ENCODE measurements at regions of chr9 and their contacts with region 1.

Region 1: DNA sequence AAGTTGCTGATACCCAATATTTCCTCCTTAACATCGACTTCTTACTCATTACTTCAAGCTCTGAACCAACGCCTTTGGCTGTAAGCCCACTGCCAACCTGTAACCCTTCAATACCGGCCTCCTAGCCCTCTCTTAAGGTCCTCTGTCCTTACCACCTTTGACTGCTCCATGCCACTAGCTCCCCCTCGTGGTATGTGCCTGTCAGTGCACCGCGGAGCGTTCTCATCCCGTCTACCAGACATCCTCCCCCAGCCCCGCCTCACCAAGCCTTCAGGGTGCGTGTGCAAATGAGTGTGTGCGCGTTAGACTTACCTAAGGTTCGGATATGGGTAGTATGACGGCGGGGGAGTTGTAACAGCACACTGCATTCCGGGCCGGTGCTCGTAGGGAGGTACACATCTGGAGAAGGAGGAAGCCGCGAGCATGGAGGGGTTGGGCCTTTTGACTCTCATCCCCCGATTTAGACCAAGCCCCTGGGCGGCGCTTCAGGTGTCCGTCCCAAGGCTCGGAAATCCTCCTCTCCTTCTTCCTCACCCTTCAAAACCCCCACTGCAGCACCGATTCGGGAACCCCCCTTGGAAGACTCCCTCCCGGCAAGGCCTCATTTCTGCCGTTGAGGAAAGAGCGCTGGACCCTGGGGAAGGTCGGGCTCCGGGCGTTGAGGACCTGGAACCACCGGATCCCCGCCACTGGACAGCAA is 2.8 kb upstream of the MYORG start:
- DNase-seq: peak; percentile 88
- H3K4me3 ChIP-seq: peak overlapping the region; percentile 61
- H3K27ac ChIP-seq: no peak overlapping the region
- H3K4me1 ChIP-seq: peaks cover 42% of the 10 kb centered on the region
- CTCF ChIP-seq: peak; percentile 98

Region 2: DNA sequence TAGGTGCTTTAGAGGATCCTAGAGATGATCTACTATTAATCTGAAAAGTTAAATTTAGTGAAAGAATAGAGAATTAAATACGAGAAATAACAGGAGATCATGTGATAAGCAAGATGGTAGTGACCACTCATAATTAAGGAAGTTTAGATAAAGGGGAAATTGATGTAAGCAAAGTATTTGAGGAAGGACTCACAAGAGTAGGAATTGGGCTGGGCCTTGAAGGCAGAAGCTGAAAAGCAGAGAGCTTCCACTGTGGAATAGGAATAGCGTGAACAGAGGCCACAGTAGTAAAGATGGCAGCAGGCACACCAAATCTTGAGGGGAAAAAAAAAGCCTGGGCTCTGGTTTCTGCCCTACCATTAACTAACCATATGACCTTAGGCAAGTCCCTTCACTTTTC is 88.5 kb before region 1 on chr9:
- CTCF ChIA-PET with region 1: no interaction called
- POLR2A ChIA-PET with region 1: no interaction called
- intact Hi-C with region 1: no loop called
- DNase-seq: no peak
- H3K4me3 ChIP-seq: no peak overlapping the region
- H3K27ac ChIP-seq: no peak overlapping the region
- H3K4me1 ChIP-seq: no peaks in the 10 kb centered on the region
- CTCF ChIP-seq: no peak

Region 3: DNA sequence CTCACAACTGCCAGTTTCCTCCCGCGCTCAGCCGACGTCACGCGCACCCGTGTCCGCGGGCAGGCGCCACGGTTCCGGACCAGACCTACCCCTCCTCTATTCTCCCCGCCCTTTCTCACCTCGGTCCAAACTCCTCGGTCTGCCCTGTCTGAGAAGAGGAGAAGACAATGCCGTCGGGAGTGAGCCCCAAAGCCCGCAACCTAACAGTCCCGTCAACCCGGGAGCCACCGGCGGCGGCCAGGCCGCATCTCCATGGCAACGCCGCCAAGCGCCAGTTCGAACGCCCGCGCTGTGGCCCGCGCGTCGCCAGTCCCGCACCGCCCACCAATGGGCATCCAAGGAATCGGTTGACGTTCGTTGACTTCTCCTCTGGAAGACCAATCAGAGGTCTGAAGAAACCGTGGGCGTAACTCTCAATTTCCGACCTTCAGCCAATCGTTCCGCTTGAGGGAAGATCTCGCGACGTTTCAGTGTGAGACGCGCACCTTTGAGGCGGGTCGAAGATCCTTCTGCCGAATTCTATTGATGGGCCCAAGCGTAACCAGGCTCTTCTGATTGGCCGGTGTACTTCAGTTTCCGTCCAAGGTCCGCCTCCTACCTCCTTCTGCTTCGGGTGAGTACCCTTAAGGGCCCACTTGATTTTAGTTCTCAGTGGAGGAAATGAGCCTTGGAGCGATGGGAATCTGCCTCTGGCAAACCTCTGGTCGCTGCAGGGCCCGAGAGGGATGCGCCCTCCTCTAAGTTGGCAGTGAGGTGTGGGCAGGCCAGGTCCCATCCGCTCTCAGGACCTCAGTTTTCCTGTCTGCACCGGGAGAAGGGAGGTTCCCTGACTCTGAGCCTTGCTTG is 50.3 kb before region 1 on chr9 and contains the starts of genes KIF24 and NUDT2:
- CTCF ChIA-PET with region 1: interaction called, 6 read pairs
- POLR2A ChIA-PET with region 1: interaction called, 8 read pairs
- intact Hi-C with region 1: loop called (anchors 1 kb)
- DNase-seq: peak; percentile 100
- H3K4me3 ChIP-seq: peak within 1 kb of the TSS; percentile 98
- H3K27ac ChIP-seq: peak within 1 kb of the TSS; percentile 74
- H3K4me1 ChIP-seq: peaks cover 46% of the 10 kb centered on the region
- CTCF ChIP-seq: no peak
- total RNA-seq, gene KIF24: 16.3 and 19.4 TPM in 2 replicates
- total RNA-seq, gene NUDT2: 23.8 and 27.7 TPM in 2 replicates

Measured in OCI-LY7 (cell line).